Mammary epithelial cell (primary cell): ENCODE measurements at regions of chr1 and their contacts with region 1.

Region 1: DNA sequence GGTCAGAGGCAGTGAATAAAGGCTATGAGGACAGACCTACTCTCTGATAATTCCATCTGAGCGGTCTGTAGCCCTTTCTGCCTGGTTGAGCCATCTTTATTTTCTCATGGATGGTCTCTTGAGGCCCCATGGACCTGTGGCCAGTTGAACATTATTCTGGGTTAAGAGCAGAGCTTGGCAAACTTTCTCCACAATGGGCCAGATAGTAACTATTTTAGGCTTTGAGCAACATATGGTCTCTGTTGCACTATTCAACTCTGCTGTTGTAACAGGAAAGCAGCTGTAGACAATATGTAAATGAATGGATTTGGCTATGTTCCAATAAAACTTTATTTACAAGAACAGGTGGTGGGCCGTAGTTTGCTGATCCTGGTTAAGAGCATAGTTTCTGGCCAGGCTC is 62.7 kb downstream of the KAZN start:
- DNase-seq: no peak
- H3K4me3 ChIP-seq: no peak overlapping the region
- H3K27ac ChIP-seq: no peak overlapping the region
- H3K4me1 ChIP-seq: no peaks in the 10 kb centered on the region
- H3K27me3 ChIP-seq: no peaks in the 10 kb centered on the region
- CTCF ChIP-seq: no peak

Region 2: GRCh38 chr1:14699620-14700019 is 38.4 kb after region 1 on chr1:
- CTCF ChIA-PET with region 1: no interaction called
- dilution Hi-C with region 1: loop called (anchors 5 kb)
- in situ Hi-C with region 1: no loop called
- intact Hi-C with region 1: no loop called
- DNase-seq: no peak
- H3K4me3 ChIP-seq: no peak overlapping the region
- H3K27ac ChIP-seq: no peak overlapping the region
- H3K4me1 ChIP-seq: peaks cover 2% of the 10 kb centered on the region
- H3K27me3 ChIP-seq: no peaks in the 10 kb centered on the region
- CTCF ChIP-seq: no peak